HepG2 (cell line): ENCODE measurements at regions of chr7 and their contacts with region 1.

Region 1: GRCh38 chr7:101058355-101058754 is 26.9 kb upstream of the TRIM56 start:
- DNase-seq: peak; percentile 48
- ATAC-seq: peak; percentile 59; the same call in 2 of the 3 replicates
- H3K4me3 ChIP-seq: no peak overlapping the region
- H3K27ac ChIP-seq: no peak overlapping the region
- H3K4me1 ChIP-seq: no peaks in the 10 kb centered on the region
- H3K27me3 ChIP-seq: peaks cover 0 to 11% of the 10 kb centered on the region in 2 experiments; a peak in 2 of 5 replicates
- CTCF ChIP-seq: peak; percentile 6; the same call in 1 of the 2 replicates
- EP300 ChIP-seq: no peak
- POLR2A ChIP-seq: no peak
- RAD21 ChIP-seq: no peak

Region 2: DNA sequence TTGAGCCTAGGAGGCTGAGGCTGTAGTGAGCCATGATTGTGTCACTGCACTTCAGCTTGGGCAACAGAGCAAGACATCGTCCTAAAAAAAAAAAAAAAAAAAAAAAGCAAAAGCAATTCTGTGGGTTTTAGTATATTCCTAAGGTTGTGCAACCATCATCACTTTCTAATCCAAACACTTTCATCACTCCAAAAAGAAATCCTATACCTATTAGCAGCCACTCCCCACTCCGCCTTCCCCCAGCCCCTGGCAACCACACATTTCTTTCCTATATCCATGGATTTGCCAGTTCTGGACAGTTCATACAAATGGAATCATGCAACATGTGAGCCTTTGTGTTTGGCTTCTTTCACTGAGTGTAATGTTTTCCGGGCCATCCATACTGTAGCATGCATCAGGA is 304.6 kb before region 1 on chr7:
- CTCF ChIA-PET with region 1: no interaction called
- POLR2A ChIA-PET with region 1: no interaction called
- in situ Hi-C with region 1: loop called (anchors 25 kb)
- intact Hi-C with region 1: no loop called
- DNase-seq: no peak
- ATAC-seq: no peak
- H3K4me3 ChIP-seq: no peak overlapping the region
- H3K27ac ChIP-seq: no peak overlapping the region
- H3K4me1 ChIP-seq: peaks cover 12% of the 10 kb centered on the region
- H3K27me3 ChIP-seq: peaks cover 0 to 15% of the 10 kb centered on the region in 2 experiments; a peak in 2 of 5 replicates
- CTCF ChIP-seq: no peak
- EP300 ChIP-seq: no peak
- POLR2A ChIP-seq: no peak
- RAD21 ChIP-seq: no peak

Region 3: GRCh38 chr7:100896732-100897608 is 161.4 kb before region 1 on chr7:
- CTCF ChIA-PET with region 1: interaction called, 28 read pairs
- POLR2A ChIA-PET with region 1: no interaction called
- in situ Hi-C with region 1: loop called (anchors 5 kb)
- intact Hi-C with region 1: loop called (anchors 1 kb)
- DNase-seq: no peak
- ATAC-seq: peak; percentile 5
- H3K4me3 ChIP-seq: peak overlapping the region; percentile 26 to 67 (median 43); a peak in 5 of 6 replicates
- H3K27ac ChIP-seq: no peak overlapping the region
- H3K4me1 ChIP-seq: peaks cover 28% of the 10 kb centered on the region
- H3K27me3 ChIP-seq: peaks cover 11 to 32% of the 10 kb centered on the region in 2 experiments
- CTCF ChIP-seq: peak; percentile 85
- EP300 ChIP-seq: no peak
- POLR2A ChIP-seq: no peak
- RAD21 ChIP-seq: peak; percentile 76

Region 4: DNA sequence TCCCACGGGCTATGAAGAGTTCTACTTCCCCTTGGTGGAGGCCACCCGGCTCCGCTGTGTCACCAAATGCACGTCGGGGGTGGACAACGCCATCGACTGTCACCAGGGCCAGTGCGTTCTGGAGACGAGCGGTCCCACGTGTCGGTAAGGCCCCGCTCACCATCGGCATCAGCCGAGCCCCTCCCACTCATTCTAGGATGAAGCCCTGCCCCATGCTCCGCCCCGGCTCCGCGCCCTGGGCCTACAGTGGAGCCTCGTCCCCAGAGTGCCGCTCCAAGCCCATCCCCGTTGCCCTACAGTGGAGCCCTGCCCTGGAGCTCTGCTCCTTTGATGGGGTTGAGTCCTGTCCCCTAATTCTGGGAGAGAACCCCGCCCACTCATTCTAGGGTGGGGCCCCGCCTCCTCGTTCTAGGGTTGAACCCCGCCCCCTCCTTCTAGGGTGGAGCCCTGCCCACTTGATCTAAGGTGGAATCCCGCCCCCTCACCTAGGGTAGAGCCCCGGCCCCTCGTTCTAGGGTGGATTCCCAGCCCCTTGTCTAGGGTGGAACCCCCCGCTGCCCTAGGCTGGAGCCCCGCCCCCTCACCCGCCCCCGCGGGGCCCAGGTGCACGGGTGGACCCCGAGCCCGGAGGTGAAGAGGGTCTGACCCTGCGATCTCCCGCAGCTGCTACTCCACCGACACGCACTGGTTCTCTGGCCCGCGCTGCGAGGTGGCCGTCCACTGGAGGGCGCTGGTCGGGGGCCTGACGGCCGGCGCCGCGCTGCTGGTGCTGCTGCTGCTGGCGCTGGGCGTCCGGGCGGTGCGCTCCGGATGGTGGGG is 92.4 kb before region 1 on chr7:
- CTCF ChIA-PET with region 1: interaction called, 45 read pairs
- POLR2A ChIA-PET with region 1: no interaction called
- in situ Hi-C with region 1: loop called (anchors 5 kb)
- intact Hi-C with region 1: loop called (anchors 1 kb)
- DNase-seq: peak; percentile 57
- ATAC-seq: peak; percentile 91
- H3K4me3 ChIP-seq: peak overlapping the region in 1 of 3 experiments; percentile 38; a peak in 1 of 6 replicates
- H3K27ac ChIP-seq: no peak overlapping the region
- H3K4me1 ChIP-seq: 0 out of 2 replicates have a peak, but pooled peaks cover 10% of the 10 kb centered on the region
- H3K27me3 ChIP-seq: peaks cover 10 to 33% of the 10 kb centered on the region in 2 experiments
- CTCF ChIP-seq: peak; percentile 91
- EP300 ChIP-seq: no peak
- POLR2A ChIP-seq: no peak
- RAD21 ChIP-seq: peak; percentile 91